Activated naive CD4-positive, alpha-beta T cell treated with anti-CD3 and anti-CD28 coated beads for 36 hours (primary cell): ENCODE measurements at regions of chr17 and their contacts with region 1.

Region 1: DNA sequence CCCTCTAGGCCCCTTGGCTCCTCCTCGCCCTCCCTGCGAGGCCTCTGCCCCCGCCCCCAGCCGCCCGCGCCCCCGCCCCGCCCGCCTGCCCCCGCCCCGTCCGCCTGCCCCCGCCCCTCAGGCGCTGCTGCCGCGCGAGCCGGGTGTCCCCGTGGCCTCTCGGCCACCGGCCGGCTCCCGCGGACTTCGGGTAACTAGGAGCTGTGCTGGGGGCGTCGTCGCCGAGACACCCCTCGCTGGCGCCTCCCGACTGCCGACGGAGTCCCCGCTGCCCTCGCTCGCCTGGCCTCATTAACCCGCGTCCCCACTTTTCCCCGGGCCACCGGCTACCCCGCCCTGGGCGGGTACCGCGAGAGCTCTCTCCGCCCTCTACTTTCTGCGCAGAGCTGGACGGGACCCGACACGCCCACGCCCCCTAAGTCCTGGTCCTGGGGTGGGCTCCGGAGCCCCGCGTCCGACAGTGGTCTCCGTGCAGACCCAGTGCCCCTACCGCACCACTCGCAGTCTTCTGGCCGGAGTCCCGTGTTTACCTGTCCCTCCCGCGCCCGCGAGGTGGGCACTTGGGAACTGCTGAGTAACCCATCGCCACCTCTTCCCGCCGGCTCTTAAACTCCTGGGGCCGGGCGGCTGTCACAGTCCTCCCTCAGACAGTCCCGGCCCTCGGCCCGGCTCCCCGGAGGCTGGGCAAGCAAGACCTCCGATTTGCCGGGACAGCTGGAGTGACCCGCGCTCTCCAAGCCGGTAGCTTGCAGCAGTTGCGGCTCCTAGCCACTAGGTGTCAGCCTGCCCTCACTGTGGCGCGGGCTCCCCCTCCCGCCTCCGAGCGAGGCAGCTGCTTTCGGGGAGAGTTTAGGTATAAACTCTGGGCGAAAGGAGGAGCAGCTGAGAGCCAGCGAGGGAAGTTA is at the start of gene TLCD1:
- DNase-seq: peak; percentile 96
- H3K4me3 Mint-ChIP-seq: peak within 1 kb of the TSS; percentile 91
- H3K27ac Mint-ChIP-seq: peak within 1 kb of the TSS; percentile 99
- H3K4me1 Mint-ChIP-seq: peaks cover 42% of the 10 kb centered on the region
- H3K27me3 Mint-ChIP-seq: no peaks in the 10 kb centered on the region
- total RNA-seq, gene TLCD1: 4.0 to 4.6 TPM

Region 2: GRCh38 chr17:27559506-27560481 is 1166.7 kb before region 1 on chr17:
- CTCF ChIA-PET with region 1: no interaction called
- intact Hi-C with region 1: no loop called
- DNase-seq: no peak
- H3K4me3 Mint-ChIP-seq: no peak overlapping the region
- H3K27ac Mint-ChIP-seq: peak overlapping the region; percentile 44
- H3K4me1 Mint-ChIP-seq: peaks cover 25% of the 10 kb centered on the region
- H3K27me3 Mint-ChIP-seq: no peaks in the 10 kb centered on the region

Region 3: DNA sequence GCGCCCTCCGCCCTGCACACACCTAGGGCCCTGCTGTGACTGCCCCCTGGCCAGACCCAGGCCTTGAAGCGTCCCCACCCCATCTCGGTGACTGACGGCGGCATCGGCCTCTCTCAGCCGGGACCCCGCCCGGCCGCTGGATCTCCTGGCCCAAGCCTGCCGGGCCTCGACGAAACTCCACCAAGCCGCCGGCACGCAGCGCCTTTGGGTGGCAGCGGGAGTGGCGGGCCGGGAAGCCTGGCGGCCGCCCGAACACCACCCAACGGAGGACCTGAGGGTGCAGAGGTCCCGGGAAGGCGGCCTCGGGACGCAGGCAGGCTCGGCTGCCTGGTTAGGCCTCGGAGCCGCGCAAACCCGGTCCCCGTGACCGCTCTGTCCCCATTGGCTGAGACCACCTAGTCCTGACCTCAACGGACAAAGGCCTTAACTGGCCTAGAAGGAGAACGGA is 419.5 kb before region 1 on chr17:
- CTCF ChIA-PET with region 1: no interaction called
- intact Hi-C with region 1: no loop called
- DNase-seq: no peak
- H3K4me3 Mint-ChIP-seq: no peak overlapping the region
- H3K27ac Mint-ChIP-seq: no peak overlapping the region
- H3K4me1 Mint-ChIP-seq: no peaks in the 10 kb centered on the region
- H3K27me3 Mint-ChIP-seq: peaks cover 20% of the 10 kb centered on the region

Region 4: GRCh38 chr17:28644985-28645939 is 81.2 kb before region 1 on chr17 and contains the start of gene BLTP2:
- CTCF ChIA-PET with region 1: interaction called, 5 read pairs
- intact Hi-C with region 1: loop called (anchors 1 kb)
- DNase-seq: peak; percentile 96
- H3K4me3 Mint-ChIP-seq: peak within 1 kb of the TSS; percentile 84
- H3K27ac Mint-ChIP-seq: peak within 1 kb of the TSS; percentile 86
- H3K4me1 Mint-ChIP-seq: peaks cover 36% of the 10 kb centered on the region
- H3K27me3 Mint-ChIP-seq: no peaks in the 10 kb centered on the region
- total RNA-seq, gene BLTP2: 89.4 to 92.0 TPM

Region 5: GRCh38 chr17:28701987-28702751 is 24.3 kb before region 1 on chr17:
- CTCF ChIA-PET with region 1: no interaction called
- intact Hi-C with region 1: no loop called
- DNase-seq: no peak
- H3K4me3 Mint-ChIP-seq: no peak overlapping the region
- H3K27ac Mint-ChIP-seq: no peak overlapping the region
- H3K4me1 Mint-ChIP-seq: no peaks in the 10 kb centered on the region
- H3K27me3 Mint-ChIP-seq: no peaks in the 10 kb centered on the region

Region 6: DNA sequence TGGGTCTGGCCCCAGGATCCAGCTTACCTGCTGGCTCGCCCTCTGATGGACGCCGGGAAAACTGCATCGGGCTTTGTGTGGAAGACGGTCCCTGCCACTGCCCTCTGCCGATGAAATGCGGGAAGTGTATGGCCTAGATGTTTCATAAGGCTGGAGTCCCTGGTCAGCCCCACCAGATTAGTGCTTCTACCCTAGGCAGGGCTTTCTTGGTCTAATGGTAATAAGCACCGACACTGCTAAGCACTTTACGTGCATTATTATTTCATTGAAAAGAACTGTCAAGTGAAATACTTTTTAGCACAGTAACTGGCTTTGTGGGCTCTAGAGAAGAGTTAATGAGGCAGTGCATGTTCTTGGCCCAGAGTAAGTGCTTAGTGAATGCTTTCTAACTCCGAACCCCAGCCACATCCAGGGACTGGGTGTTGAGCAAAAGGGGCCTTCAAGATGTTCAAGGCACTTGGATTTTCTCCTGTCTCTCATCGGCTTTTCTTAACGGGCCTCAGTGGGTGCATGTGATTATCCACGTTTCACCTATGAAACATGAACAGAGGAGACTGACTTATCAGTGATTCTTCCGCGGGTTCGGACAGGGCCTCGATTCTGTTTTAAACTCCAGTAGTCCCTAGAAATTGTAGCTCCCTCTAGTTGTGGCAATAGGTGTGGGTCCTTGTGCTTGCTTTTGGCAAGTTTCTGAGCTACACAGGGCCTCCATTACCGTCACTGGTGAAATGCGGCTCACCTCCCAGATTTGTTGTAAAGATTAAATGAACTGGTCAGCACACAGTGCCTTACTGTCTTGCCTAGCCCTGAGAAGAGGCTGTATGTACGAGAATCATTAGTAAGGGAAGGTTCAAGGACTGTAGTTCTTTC is 23.9 kb after region 1 on chr17:
- CTCF ChIA-PET with region 1: interaction called, 353 read pairs
- intact Hi-C with region 1: loop called (anchors 1 kb)
- DNase-seq: peak; percentile 96
- H3K4me3 Mint-ChIP-seq: peak overlapping the region; percentile 6
- H3K27ac Mint-ChIP-seq: peak overlapping the region; percentile 71
- H3K4me1 Mint-ChIP-seq: peaks cover 38% of the 10 kb centered on the region
- H3K27me3 Mint-ChIP-seq: no peaks in the 10 kb centered on the region

Region 7: DNA sequence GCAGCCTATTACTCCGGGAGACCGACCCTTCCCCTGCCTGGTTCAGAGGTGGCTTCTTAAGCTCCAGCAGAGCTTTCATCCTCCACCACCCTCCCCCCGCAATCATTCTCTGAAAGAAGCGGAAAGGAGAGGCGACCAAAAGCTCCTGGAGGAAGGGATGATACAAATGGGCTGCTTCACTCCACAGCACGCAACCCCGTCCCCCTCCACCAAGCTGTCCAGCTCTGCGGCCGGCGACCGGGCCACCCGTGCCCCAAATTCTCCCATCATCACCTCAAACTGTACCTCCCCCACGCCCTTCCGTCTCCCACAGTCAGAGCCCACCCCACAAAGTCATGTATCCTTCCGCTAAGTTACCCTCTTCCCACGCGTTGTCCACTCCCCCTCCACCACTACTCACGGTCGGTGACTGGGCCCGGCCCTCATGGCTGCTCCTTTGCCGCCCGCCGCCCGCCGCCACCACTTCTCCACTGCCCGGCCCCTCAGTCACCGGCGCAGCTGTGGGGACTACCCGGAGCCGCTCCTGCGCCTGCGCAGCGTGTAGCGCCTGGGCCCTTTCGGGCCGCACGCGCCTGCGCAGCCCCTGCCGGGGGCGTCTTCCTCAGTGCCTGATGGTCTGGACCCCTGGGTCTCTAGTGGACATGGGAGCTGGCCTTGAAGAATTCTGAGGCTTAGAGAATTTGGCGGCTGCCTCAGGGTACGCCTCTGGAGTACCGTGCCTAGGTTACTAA is 116.0 kb after region 1 on chr17 and contains the start of gene FAM222B:
- CTCF ChIA-PET with region 1: interaction called, 11 read pairs
- intact Hi-C with region 1: loop called (anchors 1 kb)
- DNase-seq: peak; percentile 88
- H3K4me3 Mint-ChIP-seq: peak within 1 kb of the TSS; percentile 99
- H3K27ac Mint-ChIP-seq: peak within 1 kb of the TSS; percentile 95
- H3K4me1 Mint-ChIP-seq: peaks cover 31% of the 10 kb centered on the region
- H3K27me3 Mint-ChIP-seq: no peaks in the 10 kb centered on the region
- total RNA-seq, gene FAM222B: 11.2 TPM

Region 8: DNA sequence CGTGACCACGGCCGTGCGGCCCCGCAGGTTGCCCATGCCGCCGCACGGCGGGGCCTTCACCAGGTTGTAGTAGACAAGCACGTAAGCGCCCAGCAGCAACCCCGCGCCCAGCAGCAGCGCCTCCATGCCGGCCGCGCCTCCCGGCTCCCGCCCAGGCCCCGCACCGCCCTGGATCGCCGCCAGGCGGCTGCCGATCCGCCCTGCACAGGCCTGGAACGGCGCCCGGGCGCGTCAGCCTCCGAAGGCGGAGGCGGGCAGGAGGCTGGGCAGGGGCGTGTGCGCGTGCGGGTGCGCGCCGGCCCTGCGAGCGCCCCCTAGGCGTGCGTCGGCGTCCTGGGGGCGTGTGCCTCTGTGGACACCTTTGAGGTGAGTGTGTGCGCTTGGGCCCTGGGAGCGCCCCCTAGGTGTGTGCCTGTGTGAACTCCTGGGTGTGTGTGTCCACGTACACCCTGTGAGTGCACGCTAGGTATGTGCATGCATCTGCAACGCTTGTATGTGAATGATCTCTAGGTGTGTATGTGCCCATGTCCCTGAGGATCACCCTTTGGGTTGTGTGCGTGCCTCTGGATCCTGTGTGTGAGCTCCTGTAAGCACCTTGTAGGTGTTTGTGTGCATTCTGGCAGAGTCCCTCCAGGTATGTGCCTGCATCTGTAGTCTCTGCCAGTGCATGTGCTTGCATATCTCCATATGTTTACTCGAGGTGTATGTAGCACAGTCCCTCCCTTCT is 176.5 kb after region 1 on chr17 and contains the start of gene DHRS13:
- CTCF ChIA-PET with region 1: interaction called, 34 read pairs
- intact Hi-C with region 1: loop called (anchors 1 kb)
- DNase-seq: peak; percentile 93
- H3K4me3 Mint-ChIP-seq: peak within 1 kb of the TSS; percentile 98
- H3K27ac Mint-ChIP-seq: peak within 1 kb of the TSS; percentile 88
- H3K4me1 Mint-ChIP-seq: peaks cover 35% of the 10 kb centered on the region
- H3K27me3 Mint-ChIP-seq: no peaks in the 10 kb centered on the region
- total RNA-seq, gene DHRS13: 20.1 to 20.9 TPM

Region 9: DNA sequence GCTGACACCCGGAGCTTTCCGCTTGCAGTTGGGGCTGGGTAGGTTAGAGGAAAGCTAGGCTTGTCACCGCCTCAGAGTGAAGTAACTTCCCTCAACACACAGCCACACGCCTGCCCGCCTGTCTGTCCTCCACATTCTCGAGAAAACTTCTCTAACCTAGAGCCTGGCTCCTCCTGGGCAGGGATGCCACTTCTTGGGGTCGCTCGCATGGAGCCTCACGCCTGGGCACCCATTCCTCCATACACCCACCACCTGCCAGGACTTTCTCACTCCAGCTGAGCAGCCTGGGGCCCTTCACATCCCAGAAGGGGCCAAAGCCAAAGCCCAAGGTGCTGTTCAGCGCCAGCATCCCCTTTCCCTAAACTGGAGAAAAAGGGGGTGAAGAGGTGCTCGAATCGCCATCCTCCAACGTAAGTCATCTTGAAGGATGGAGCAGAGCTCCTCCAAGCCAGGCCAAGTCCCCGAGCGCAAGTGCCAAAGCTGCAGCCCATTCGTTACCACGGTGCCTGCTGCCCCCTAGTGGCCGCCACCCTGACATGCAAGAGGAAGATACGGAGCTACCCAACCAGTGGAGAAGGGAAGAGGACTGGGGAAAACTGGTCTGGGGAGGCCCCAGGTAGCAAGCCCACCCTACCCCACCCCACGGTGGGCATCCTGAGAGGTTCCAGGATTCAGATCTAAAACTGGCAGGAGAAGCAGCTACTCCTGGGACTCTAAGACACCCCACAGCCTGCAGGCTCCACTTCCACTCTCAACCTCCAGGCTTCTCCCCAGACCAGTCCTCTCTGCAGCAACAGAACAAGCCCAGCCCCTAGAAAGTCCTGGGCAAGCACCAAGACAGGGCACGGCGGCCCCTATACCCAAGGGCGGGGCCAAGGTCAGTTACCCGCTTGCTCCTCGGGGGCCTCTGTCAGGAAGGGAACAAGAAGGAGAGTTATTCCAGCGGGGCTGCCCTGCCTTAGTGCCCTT is 390.6 kb after region 1 on chr17:
- CTCF ChIA-PET with region 1: interaction called, 6 read pairs
- intact Hi-C with region 1: loop called (anchors 2 kb)
- DNase-seq: peak; percentile 88
- H3K4me3 Mint-ChIP-seq: no peak overlapping the region
- H3K27ac Mint-ChIP-seq: no peak overlapping the region
- H3K4me1 Mint-ChIP-seq: peaks cover 9% of the 10 kb centered on the region
- H3K27me3 Mint-ChIP-seq: no peaks in the 10 kb centered on the region